ENCODE measurements at regions of chr13 and their contacts with region 1.

Region 1: GRCh38 chr13:99606324-99607066 is 105.2 kb downstream of the TM9SF2 start:
- DNase-seq: peak; percentile 80 to 95 (median 87)
- ATAC-seq: peak; percentile 97
- H3K4me3 ChIP-seq: peak within 1 kb of the TSS; percentile 76
- H3K4me3 Mint-ChIP-seq: peak within 1 kb of the TSS; percentile 84 to 93 (median 92)
- H3K27ac ChIP-seq: peak within 1 kb of the TSS; percentile 83
- H3K27ac Mint-ChIP-seq: peak within 1 kb of the TSS; percentile 88 to 96 (median 93)
- H3K4me1 ChIP-seq: peaks cover 9 to 17% of the 10 kb centered on the region in 2 donors
- H3K4me1 Mint-ChIP-seq: peaks cover 28 to 69% (median 54%) of the 10 kb centered on the region in 7 donors
- H3K27me3 ChIP-seq: no peaks in the 10 kb centered on the region
- H3K27me3 Mint-ChIP-seq: peaks cover 0 to 11% (median 0%) of the 10 kb centered on the region in 5 donors

Region 2: DNA sequence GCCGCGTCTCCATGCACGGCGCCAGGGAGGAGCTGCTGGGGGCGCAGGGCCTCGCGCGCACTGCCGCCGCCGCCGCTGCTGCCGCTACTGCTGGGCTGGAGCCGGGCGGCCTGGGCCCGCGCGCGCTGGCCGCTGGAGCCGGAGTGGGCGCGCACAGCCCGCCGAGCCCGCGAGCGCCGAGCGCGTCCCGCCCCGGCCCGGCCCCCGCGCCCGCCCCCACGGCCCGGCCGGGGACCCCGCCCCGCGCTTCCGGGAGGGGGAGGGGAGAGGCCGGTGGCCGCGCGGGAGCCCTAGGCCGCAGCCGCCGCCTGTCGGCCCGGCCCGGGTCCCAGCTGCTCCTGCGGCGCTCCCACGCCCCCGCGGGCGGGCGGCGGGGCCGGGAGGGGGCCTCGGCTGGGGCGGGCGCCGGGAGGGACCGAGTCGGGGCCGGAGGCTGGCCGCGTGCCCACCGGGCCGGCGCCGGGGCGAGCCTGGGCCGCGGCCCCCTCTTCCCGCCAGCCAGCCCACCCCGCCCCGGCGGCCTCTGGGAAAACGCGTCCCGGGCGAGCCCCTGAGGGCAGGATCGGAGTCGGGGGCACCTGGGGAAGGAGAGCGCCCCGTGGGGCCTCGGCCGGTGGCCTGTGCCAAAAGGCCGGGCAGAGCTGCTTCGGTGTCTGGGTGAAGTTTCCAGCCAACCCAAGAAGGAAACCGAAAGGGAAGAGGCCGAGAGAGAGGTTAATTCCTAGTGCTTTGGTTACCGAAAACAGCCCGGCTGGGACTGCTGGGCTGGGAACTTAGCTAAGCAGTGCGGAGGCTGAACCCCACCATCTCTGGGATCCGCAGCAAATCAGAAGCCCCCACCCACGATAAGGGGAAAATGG is 1029.3 kb before region 1 on chr13 and contains the start of gene STK24:
- CTCF ChIA-PET with region 1: no interaction called
- POLR2A ChIA-PET with region 1: no interaction called
- intact Hi-C with region 1: loop called in 1 of 2 experiments (anchors 10 kb)
- DNase-seq: peak in 5 of 9 donors; percentile 34 to 87 (median 66)
- ATAC-seq: peak; percentile 85
- H3K4me3 ChIP-seq: peak within 1 kb of the TSS; percentile 72
- H3K4me3 Mint-ChIP-seq: peak within 1 kb of the TSS; percentile 84 to 99 (median 93)
- H3K27ac ChIP-seq: peak within 1 kb of the TSS; percentile 85
- H3K27ac Mint-ChIP-seq: peak within 1 kb of the TSS; percentile 84 to 96 (median 93)
- H3K4me1 ChIP-seq: peaks cover 26 to 35% of the 10 kb centered on the region in 2 donors
- H3K4me1 Mint-ChIP-seq: peaks cover 35 to 48% (median 37%) of the 10 kb centered on the region in 7 donors
- H3K27me3 ChIP-seq: no peaks in the 10 kb centered on the region
- H3K27me3 Mint-ChIP-seq: no peaks in the 10 kb centered on the region
- total RNA-seq, gene STK24: 90.1 to 148 (median 121) TPM

Region 3: DNA sequence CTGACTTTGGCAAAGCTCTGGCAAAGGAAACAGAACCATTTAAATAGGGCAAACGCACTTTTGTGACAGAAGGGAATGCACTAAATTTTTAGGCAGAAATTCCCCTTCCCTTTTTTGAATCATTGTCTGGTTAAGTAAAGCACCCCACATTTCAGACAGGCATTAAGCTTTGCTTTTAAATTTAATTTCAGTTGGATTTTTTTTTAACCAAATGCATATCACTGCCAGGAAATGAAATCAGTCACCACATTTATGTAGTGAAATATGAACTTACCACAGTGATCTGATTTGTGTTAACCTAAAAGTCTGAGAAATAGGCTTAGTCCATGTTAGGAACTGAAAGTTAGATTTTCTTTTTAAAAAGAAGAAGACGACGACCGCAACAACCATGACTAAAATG is 310.1 kb before region 1 on chr13:
- CTCF ChIA-PET with region 1: no interaction called
- POLR2A ChIA-PET with region 1: no interaction called
- intact Hi-C with region 1: loop called (anchors 10 kb)
- DNase-seq: peak in 6 of 9 donors; percentile 49 to 69 (median 57)
- ATAC-seq: peak; percentile 59
- H3K4me3 ChIP-seq: peak overlapping the region; percentile 28
- H3K4me3 Mint-ChIP-seq: peak overlapping the region; percentile 73 to 91 (median 82)
- H3K27ac ChIP-seq: peak overlapping the region; percentile 73
- H3K27ac Mint-ChIP-seq: peak overlapping the region; percentile 89 to 98 (median 93)
- H3K4me1 ChIP-seq: peaks cover 78 to 81% of the 10 kb centered on the region in 2 donors
- H3K4me1 Mint-ChIP-seq: peaks cover 60 to 94% (median 88%) of the 10 kb centered on the region in 7 donors
- H3K27me3 ChIP-seq: no peaks in the 10 kb centered on the region
- H3K27me3 Mint-ChIP-seq: no peaks in the 10 kb centered on the region

Region 4: DNA sequence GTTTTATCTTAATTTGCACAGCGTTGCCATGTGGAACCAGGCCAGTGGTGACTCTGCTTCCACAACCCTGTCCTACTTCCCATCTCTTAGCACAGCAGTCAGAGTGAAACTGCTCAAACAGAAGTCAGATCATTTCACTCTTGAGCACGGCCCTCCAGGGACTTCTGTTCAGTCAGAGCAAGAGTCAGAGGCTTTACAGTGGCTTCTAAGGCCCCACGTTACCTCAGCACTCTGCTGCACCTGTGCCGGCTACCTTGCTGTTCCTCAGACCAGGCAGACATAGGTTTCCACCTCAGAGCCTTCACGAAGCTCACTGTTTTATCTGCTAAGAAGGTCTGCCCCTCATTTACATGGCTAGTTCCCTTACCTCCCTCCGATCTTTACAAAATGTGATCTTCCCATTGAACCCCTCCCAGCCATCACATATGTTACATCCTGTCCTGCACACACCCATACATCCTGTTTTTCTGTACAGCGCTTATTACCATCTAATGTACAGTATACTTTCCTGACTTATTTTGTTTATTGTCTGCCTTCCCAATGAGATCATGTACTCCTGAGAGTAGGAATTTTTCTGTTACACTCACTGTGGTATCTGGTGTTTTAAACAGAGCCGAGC is 63.6 kb before region 1 on chr13:
- CTCF ChIA-PET with region 1: interaction called, 6 read pairs
- POLR2A ChIA-PET with region 1: interaction called, 15 read pairs
- intact Hi-C with region 1: loop called (anchors 1 kb)
- DNase-seq: peak in 7 of 9 donors; percentile 32 to 54 (median 45)
- ATAC-seq: peak; percentile 82
- H3K4me3 ChIP-seq: peak overlapping the region; percentile 7
- H3K4me3 Mint-ChIP-seq: peak overlapping the region; percentile 56 to 78 (median 64)
- H3K27ac ChIP-seq: peak overlapping the region; percentile 54
- H3K27ac Mint-ChIP-seq: peak overlapping the region; percentile 80 to 97 (median 89)
- H3K4me1 ChIP-seq: peaks cover 16 to 25% of the 10 kb centered on the region in 2 donors
- H3K4me1 Mint-ChIP-seq: peaks cover 29 to 62% (median 53%) of the 10 kb centered on the region in 7 donors
- H3K27me3 ChIP-seq: no peaks in the 10 kb centered on the region
- H3K27me3 Mint-ChIP-seq: no peaks in the 10 kb centered on the region

Region 5: GRCh38 chr13:99617474-99618255 is 11.2 kb after region 1 on chr13:
- CTCF ChIA-PET with region 1: interaction called, 7 read pairs
- POLR2A ChIA-PET with region 1: interaction called, 4 read pairs
- intact Hi-C with region 1: loop called (anchors 1 kb)
- DNase-seq: peak in 2 of 9 donors; percentile 19 to 20
- ATAC-seq: peak; percentile 56
- H3K4me3 ChIP-seq: no peak overlapping the region
- H3K4me3 Mint-ChIP-seq: no peak overlapping the region
- H3K27ac ChIP-seq: no peak overlapping the region
- H3K27ac Mint-ChIP-seq: peak overlapping the region in 1 of 9 donors; percentile 2
- H3K4me1 ChIP-seq: no peaks in the 10 kb centered on the region
- H3K4me1 Mint-ChIP-seq: peaks cover 6 to 40% (median 24%) of the 10 kb centered on the region in 7 donors
- H3K27me3 ChIP-seq: no peaks in the 10 kb centered on the region
- H3K27me3 Mint-ChIP-seq: peaks cover 0 to 6% (median 0%) of the 10 kb centered on the region in 5 donors

Region 6: DNA sequence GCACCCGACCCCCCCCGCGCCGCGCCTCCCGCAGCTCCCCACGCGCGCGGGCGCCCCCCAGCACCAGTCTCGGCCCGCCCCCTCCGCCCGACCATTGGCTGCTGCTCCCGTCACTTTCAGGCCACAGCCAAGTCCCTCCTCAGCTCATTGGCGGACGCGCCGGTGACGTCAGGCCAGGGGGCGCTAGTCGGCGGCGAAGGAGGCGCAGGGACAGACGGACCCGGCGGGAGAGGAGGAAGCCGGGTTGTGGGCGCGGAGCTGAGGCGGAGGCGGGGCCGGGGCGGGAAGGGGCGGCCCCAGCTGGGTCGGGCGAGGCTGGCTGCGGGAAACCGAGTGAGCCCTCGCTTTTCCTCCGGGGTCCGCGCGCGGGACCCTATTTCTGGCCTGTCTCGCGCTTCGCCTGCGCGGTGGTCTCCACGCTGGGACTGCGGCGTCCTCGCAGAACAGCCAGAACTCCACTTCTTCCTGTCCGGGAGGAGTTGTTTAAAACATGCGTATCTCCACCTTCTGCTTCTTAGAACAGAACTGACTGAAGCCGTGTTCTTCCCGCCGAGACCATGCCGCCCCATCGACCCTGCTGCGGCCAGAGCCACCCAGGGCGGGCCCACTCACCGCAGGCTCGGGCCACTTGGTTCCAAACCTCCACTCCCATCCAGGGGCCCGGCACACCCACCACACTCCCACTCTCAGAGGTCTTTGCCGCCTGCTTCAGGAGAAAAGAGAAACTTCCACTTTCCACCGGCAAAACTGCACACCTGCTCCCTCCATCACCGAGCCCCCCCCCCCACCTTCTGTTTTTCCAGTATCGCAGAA is 1068.6 kb after region 1 on chr13:
- CTCF ChIA-PET with region 1: no interaction called
- POLR2A ChIA-PET with region 1: no interaction called
- intact Hi-C with region 1: loop called (anchors 1 to 2 kb)
- DNase-seq: peak; percentile 97 to 100 (median 99)
- ATAC-seq: peak; percentile 96
- H3K4me3 ChIP-seq: peak overlapping the region; percentile 93
- H3K4me3 Mint-ChIP-seq: peak overlapping the region; percentile 86 to 95 (median 90)
- H3K27ac ChIP-seq: peak overlapping the region; percentile 84
- H3K27ac Mint-ChIP-seq: peak overlapping the region; percentile 64 to 91 (median 86)
- H3K4me1 ChIP-seq: peaks cover 7 to 9% of the 10 kb centered on the region in 2 donors
- H3K4me1 Mint-ChIP-seq: peaks cover 17 to 38% (median 30%) of the 10 kb centered on the region in 7 donors
- H3K27me3 ChIP-seq: no peaks in the 10 kb centered on the region
- H3K27me3 Mint-ChIP-seq: peaks cover 0 to 20% (median 0%) of the 10 kb centered on the region in 5 donors